Adrenal gland (tissue), 19 donors: ENCODE measurements at regions of chr17 and their contacts with region 1.

Region 1: GRCh38 chr17:36117505-36118382 is 14.1 kb downstream of the CCL4 start:
- DNase-seq: no peak
- H3K4me3 ChIP-seq: no peak overlapping the region
- H3K27ac ChIP-seq: no peak overlapping the region
- H3K4me1 ChIP-seq: no peaks in the 10 kb centered on the region
- H3K27me3 ChIP-seq: no peaks in the 10 kb centered on the region
- CTCF ChIP-seq: no peak
- POLR2A ChIP-seq: no peak

Region 2: DNA sequence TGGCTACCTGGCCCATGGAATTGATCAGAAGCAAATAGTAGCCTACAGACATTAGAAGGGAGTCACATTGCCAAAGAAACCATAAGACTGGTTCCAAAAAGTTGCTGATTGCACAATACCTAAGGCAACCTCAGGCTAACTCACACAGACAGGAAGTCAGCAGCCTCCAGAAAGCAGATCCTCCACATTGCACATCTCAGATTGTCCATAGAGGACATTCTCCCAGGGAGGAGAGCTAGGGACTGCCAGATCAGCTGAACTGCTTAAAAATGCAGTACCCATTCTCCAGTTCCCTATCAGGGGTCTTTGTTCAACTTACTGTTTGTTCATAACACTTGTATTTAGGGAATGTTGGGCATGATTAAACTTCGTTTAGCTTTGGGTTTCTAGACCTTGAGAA is 32.0 kb before region 1 on chr17:
- intact Hi-C with region 1: no loop called
- DNase-seq: peak in 3 of 7 donors; percentile 39 to 63 (median 54)
- H3K4me3 ChIP-seq: no peak overlapping the region
- H3K27ac ChIP-seq: peak overlapping the region in 1 of 5 donors; percentile 50
- H3K4me1 ChIP-seq: peaks cover 0 to 3% of the 10 kb centered on the region in 2 donors
- H3K27me3 ChIP-seq: no peaks in the 10 kb centered on the region
- CTCF ChIP-seq: no peak
- POLR2A ChIP-seq: no peak

Region 3: GRCh38 chr17:36183001-36183971 is 65.5 kb after region 1 on chr17:
- intact Hi-C with region 1: loop called in 1 of 2 experiments (anchors 10 kb)
- DNase-seq: peak in 6 of 7 donors; percentile 39 to 82 (median 50)
- H3K4me3 ChIP-seq: peak overlapping the region in 3 of 4 donors; percentile 11 to 87 (median 58)
- H3K27ac ChIP-seq: peak overlapping the region in 3 of 5 donors; percentile 57 to 78 (median 59)
- H3K4me1 ChIP-seq: peaks cover 0 to 6% of the 10 kb centered on the region in 2 donors
- H3K27me3 ChIP-seq: peaks cover 15% of the 10 kb centered on the region
- CTCF ChIP-seq: no peak
- POLR2A ChIP-seq: peak in 1 of 2 donors; percentile 37